HEK293T (cell line): ENCODE measurements at regions of chr2 and their contacts with region 1.

Region 1: GRCh38 chr2:68751397-68752339 is 17.1 kb downstream of the ARHGAP25 start:
- DNase-seq: peak; percentile 85

Region 2: GRCh38 chr2:68908392-68908970 is 156.8 kb after region 1 on chr2:
- CTCF ChIA-PET with region 1: interaction called, 12 read pairs
- POLR2A ChIA-PET with region 1: no interaction called
- DNase-seq: peak; percentile 1